SK-N-SH (cell line): ENCODE measurements at regions of chr3 and their contacts with region 1.

Region 1: DNA sequence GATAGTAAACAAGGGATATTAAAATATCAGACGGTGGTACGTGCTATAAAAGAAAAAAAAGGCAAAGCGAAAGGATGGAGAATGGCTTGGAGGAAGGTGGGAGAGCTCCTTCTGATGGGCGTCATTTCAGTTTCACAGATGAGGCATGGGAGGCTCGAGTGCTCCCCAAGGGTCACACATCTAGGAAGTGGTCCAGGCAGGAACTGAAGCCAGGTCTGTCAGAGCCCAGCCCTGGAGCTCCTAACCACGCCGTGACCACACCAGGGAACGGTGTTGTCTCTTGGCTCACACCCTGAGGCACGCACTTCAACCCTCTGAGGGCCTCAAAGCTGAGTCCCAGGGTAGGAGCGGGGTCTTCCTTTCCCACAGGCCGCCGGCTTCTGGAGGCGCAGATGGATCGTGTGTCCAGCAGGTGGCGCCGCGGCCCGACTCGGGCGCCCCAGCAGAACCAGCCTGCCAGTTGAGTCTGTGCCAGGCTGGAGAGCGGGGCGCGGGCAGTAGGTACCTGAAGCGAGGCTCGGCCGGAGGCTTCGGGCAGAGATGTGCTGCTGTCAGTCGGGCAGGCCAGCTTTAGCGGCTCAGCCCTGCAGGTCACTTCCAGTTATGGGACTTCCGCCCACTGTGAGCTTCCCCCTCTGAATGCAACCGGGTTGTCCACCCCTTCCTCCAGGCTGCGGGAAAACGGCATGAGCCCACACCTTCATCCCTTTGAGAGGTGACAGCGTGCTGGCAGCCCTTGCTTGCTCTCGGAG is 68.1 kb downstream of the SLC6A1 start:
- DNase-seq: peak; percentile 89
- H3K4me3 ChIP-seq: peak overlapping the region; percentile 51 to 88
- H3K27ac ChIP-seq: peak overlapping the region in 1 of 2 experiments; percentile 37; a peak in 1 of 4 replicates
- H3K4me1 ChIP-seq: peaks cover 0 to 9% of the 10 kb centered on the region in 2 experiments; a peak in 1 of 4 replicates
- H3K27me3 ChIP-seq: no peaks in the 10 kb centered on the region
- CTCF ChIP-seq: peak; percentile 87
- EP300 ChIP-seq: no peak
- RAD21 ChIP-seq: peak; percentile 79

Region 2: DNA sequence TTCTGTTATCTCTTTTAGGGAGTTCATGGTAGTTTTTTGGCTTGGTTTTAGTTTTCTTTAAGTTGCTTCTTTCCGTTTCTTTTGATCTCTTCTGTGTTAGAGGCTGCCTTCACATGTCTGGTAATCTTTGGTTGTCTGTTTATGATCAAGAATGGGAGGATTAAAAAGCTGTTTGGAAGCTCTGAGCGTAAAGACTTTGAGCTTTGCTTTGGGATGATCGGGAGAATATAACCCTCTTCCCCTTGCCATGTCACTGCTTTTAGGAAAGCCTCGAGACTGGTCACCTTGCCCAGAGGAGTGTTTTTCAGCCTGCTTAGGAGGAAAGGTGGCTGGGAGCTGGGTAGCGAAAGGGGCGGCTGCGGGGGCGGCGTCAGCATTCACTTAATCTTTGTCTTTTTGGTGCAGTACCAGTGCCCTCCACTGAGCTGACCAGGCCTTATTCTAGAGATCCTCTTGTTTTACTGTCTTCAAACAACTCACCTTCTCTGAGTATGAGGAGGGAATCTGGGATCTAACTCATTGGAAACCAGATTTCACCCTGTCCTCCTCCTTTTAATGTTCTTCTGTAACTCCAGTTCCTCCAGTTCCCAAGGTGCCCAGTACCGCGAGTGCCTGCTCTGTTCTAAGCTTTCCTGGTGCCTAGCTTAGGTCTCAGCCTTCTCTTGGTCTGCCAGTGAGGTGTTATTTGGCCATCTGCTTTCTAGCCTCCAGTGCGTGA is 796.9 kb before region 1 on chr3:
- CTCF ChIA-PET with region 1: no interaction called
- POLR2A ChIA-PET with region 1: no interaction called
- DNase-seq: peak; percentile 75
- H3K4me3 ChIP-seq: no peak overlapping the region
- H3K27ac ChIP-seq: peak overlapping the region; percentile 6 to 15; a peak in 2 of 4 replicates
- H3K4me1 ChIP-seq: peaks cover 0 to 2% of the 10 kb centered on the region in 2 experiments; a peak in 1 of 4 replicates
- H3K27me3 ChIP-seq: no peaks in the 10 kb centered on the region
- CTCF ChIP-seq: peak; percentile 55
- EP300 ChIP-seq: no peak
- RAD21 ChIP-seq: no peak; the same call in 1 of the 2 replicates

Region 3: DNA sequence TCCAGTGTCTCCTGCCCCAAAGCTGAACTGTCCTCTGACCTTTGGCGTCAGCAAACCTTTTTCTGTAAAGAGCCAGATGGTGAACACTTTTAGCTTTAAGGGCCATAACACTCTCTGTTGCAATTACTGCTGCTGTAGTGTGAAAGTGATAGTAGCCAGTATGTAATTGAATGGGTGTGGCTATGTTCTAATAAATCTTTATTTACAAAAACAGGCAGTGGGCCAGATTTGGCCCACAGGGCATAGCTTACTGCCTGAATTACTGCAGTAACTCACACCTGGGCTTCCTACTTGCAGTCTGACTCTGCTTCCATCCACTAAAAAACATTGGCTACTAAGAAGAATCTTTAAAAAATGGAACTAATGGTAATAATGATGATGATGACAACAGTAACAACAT is 312.6 kb before region 1 on chr3:
- CTCF ChIA-PET with region 1: interaction called, 11 read pairs
- POLR2A ChIA-PET with region 1: no interaction called
- DNase-seq: no peak
- H3K4me3 ChIP-seq: no peak overlapping the region
- H3K27ac ChIP-seq: no peak overlapping the region
- H3K4me1 ChIP-seq: no peaks in the 10 kb centered on the region
- H3K27me3 ChIP-seq: no peaks in the 10 kb centered on the region
- CTCF ChIP-seq: no peak
- EP300 ChIP-seq: no peak
- RAD21 ChIP-seq: no peak

Region 4: GRCh38 chr3:10935846-10936631 is 124.6 kb before region 1 on chr3:
- CTCF ChIA-PET with region 1: interaction called, 281 read pairs
- POLR2A ChIA-PET with region 1: no interaction called
- DNase-seq: no peak
- H3K4me3 ChIP-seq: no peak overlapping the region
- H3K27ac ChIP-seq: no peak overlapping the region
- H3K4me1 ChIP-seq: peaks cover 0 to 12% of the 10 kb centered on the region in 2 experiments; a peak in 2 of 4 replicates
- H3K27me3 ChIP-seq: no peaks in the 10 kb centered on the region
- CTCF ChIP-seq: no peak
- EP300 ChIP-seq: no peak
- RAD21 ChIP-seq: no peak

Region 5: DNA sequence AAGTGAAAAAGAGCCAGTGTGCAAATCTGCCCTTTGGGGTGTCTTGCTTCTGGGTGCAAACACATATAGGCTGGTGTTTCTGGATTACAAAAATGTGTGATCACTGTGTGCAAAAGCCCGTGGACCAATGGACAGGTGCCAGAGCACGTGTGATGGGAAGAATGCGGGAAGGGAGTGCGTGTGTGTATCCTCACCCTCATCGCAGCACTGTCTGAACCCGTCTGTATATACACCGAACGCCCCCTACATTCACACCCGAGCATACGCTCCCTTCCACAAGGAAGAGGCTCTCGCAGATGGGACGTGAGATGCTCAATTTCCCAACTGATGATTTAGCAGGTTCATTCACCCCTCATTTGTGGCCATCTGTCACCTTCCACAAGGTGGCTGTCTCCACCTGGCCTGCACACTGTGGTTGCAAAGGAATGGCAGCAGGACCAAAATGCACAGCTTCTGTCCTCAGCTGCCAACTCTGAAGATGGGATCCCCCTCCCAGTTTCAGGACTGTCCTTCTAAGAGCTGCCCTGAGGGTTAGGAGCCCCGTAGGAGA is 87.6 kb before region 1 on chr3:
- CTCF ChIA-PET with region 1: interaction called, 12 read pairs
- POLR2A ChIA-PET with region 1: no interaction called
- DNase-seq: no peak
- H3K4me3 ChIP-seq: no peak overlapping the region
- H3K27ac ChIP-seq: no peak overlapping the region
- H3K4me1 ChIP-seq: peaks cover 0 to 5% of the 10 kb centered on the region in 2 experiments; a peak in 1 of 4 replicates
- H3K27me3 ChIP-seq: no peaks in the 10 kb centered on the region
- CTCF ChIP-seq: no peak
- EP300 ChIP-seq: no peak
- RAD21 ChIP-seq: no peak

Region 6: GRCh38 chr3:11037241-11037873 is 23.3 kb before region 1 on chr3:
- CTCF ChIA-PET with region 1: interaction called, 13 read pairs
- POLR2A ChIA-PET with region 1: no interaction called
- DNase-seq: no peak
- H3K4me3 ChIP-seq: no peak overlapping the region
- H3K27ac ChIP-seq: no peak overlapping the region
- H3K4me1 ChIP-seq: no peaks in the 10 kb centered on the region
- H3K27me3 ChIP-seq: peaks cover 11% of the 10 kb centered on the region; the same call in 1 of the 2 replicates
- CTCF ChIP-seq: no peak
- EP300 ChIP-seq: no peak
- RAD21 ChIP-seq: no peak

Region 7: GRCh38 chr3:11096266-11097135 is 35.8 kb after region 1 on chr3:
- CTCF ChIA-PET with region 1: interaction called, 44 read pairs
- POLR2A ChIA-PET with region 1: no interaction called
- DNase-seq: peak; percentile 91
- H3K4me3 ChIP-seq: peak overlapping the region; percentile 43 to 54
- H3K27ac ChIP-seq: peak overlapping the region; percentile 84 to 96
- H3K4me1 ChIP-seq: peaks cover 6 to 17% of the 10 kb centered on the region in 2 experiments; a peak in 1 of 4 replicates
- H3K27me3 ChIP-seq: no peaks in the 10 kb centered on the region
- CTCF ChIP-seq: no peak
- EP300 ChIP-seq: peak; percentile 53 to 81; a peak in 3 of 4 replicates
- RAD21 ChIP-seq: peak; percentile 17; the same call in 1 of the 2 replicates

Region 8: DNA sequence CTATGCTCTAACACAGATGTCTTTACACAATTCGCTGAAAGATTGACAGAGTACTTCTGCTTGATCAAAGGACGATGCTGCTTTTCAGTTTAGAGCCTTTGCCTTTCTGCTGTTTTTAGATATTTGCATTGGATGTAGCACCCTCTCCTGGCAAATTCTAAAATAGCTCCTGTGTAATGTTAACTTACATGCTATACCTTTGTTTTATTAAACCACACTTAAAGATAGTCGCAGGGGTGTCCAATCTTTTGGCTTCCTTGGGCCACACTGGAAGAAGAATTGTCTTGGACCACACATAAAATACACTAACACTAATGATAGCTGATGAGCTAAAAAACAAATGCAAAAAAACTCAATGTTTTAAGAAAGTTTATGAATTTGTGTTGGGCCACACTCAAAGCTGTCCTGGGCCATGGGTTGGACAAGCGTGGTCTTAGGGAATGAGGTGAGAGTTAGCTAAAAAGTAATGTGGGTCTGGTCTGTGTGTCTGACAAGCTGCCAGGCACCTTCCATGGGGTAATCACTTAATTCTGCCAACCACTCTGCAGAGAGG is 274.5 kb after region 1 on chr3:
- CTCF ChIA-PET with region 1: interaction called, 76 read pairs
- POLR2A ChIA-PET with region 1: no interaction called
- DNase-seq: peak; percentile 58
- H3K4me3 ChIP-seq: no peak overlapping the region
- H3K27ac ChIP-seq: peak overlapping the region in 1 of 2 experiments; percentile 30; a peak in 1 of 4 replicates
- H3K4me1 ChIP-seq: peaks cover 0 to 5% of the 10 kb centered on the region in 2 experiments; a peak in 1 of 4 replicates
- H3K27me3 ChIP-seq: no peaks in the 10 kb centered on the region
- CTCF ChIP-seq: peak; percentile 83
- EP300 ChIP-seq: no peak
- RAD21 ChIP-seq: peak; percentile 87